BJ (cell line): ENCODE measurements at regions of chr18 and their contacts with region 1.

Region 1: GRCh38 chr18:2932247-2933181 is 80.4 kb downstream of the LPIN2 start:
- DNase-seq: no peak
- H3K4me3 ChIP-seq: no peak overlapping the region
- H3K27me3 ChIP-seq: no peaks in the 10 kb centered on the region
- CTCF ChIP-seq: peak; percentile 62

Region 2: DNA sequence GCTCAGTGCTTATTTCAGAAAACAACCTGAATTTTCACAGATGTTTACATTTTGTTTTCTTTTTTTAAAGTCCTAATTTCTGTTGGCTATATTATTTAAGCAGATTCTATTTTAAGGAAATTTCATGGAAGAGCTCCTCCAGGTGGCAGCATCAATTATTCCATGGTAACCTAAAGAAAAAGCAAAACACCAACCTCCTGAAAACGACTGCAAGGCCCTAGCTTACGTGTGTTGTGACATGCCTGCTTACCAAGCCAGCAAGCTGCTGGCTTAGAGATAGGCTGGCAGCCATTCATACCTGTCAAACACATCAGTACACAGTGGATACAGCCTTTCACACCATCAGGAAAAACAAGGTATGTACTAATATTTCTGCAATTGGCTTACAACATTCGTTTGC is 15.5 kb after region 1 on chr18:
- CTCF ChIA-PET with region 1: interaction called, 13 read pairs
- POLR2A ChIA-PET with region 1: no interaction called
- DNase-seq: no peak
- H3K4me3 ChIP-seq: no peak overlapping the region
- H3K27me3 ChIP-seq: no peaks in the 10 kb centered on the region
- CTCF ChIP-seq: peak; percentile 47